IMR-90 (cell line): ENCODE measurements at regions of chr3 and their contacts with region 1.

Region 1: DNA sequence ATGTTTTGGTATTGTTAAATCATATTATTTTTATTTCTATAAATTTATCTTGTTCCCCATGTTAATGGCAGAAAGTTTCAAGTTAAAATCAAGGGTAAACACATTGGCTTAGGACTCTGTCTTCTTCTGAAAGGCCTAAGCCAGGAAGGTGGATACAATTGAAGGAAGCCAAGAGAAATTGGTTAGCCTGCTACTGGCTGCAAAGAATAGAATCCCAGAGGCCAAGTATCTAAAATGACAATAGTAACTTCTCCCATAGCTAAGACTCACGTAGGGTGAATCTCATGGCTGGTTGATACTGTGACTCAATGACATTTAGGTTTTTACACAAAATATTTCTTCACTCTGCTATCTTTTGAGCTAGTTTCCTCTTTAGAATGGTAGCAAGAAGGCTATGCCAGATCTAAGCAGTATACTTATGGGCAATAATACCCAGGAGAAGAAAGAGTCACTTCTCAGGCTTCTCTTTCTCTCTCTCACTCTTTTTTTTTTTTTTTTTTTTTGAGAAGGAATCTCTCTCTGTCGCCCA is 621.5 kb upstream of the TBL1XR1 start:
- DNase-seq: no peak
- ATAC-seq: no peak
- H3K4me3 ChIP-seq: no peak overlapping the region
- H3K27ac ChIP-seq: no peak overlapping the region
- H3K4me1 ChIP-seq: peaks cover 4% of the 10 kb centered on the region
- H3K27me3 ChIP-seq: no peaks in the 10 kb centered on the region
- CTCF ChIP-seq: no peak
- POLR2A ChIP-seq: no peak
- RAD21 ChIP-seq: no peak

Region 2: GRCh38 chr3:177886501-177886900 is 67.7 kb after region 1 on chr3:
- CTCF ChIA-PET with region 1: no interaction called
- POLR2A ChIA-PET with region 1: interaction called, 13 read pairs
- dilution Hi-C with region 1: no loop called
- in situ Hi-C with region 1: no loop called
- intact Hi-C with region 1: no loop called
- DNase-seq: no peak
- ATAC-seq: no peak
- H3K4me3 ChIP-seq: no peak overlapping the region
- H3K27ac ChIP-seq: no peak overlapping the region
- H3K4me1 ChIP-seq: no peaks in the 10 kb centered on the region
- H3K27me3 ChIP-seq: no peaks in the 10 kb centered on the region
- CTCF ChIP-seq: no peak
- POLR2A ChIP-seq: no peak
- RAD21 ChIP-seq: no peak

Region 3: GRCh38 chr3:178480795-178481194 is 662.0 kb after region 1 on chr3:
- CTCF ChIA-PET with region 1: no interaction called
- POLR2A ChIA-PET with region 1: no interaction called
- dilution Hi-C with region 1: no loop called
- in situ Hi-C with region 1: no loop called
- intact Hi-C with region 1: no loop called
- DNase-seq: no peak
- ATAC-seq: no peak
- H3K4me3 ChIP-seq: no peak overlapping the region
- H3K27ac ChIP-seq: no peak overlapping the region
- H3K4me1 ChIP-seq: no peaks in the 10 kb centered on the region
- H3K27me3 ChIP-seq: no peaks in the 10 kb centered on the region
- CTCF ChIP-seq: no peak
- POLR2A ChIP-seq: no peak
- RAD21 ChIP-seq: no peak

Region 4: GRCh38 chr3:178845420-178846118 is 1026.8 kb after region 1 on chr3:
- CTCF ChIA-PET with region 1: no interaction called
- POLR2A ChIA-PET with region 1: no interaction called
- dilution Hi-C with region 1: no loop called
- in situ Hi-C with region 1: no loop called
- intact Hi-C with region 1: no loop called
- DNase-seq: no peak
- ATAC-seq: no peak
- H3K4me3 ChIP-seq: no peak overlapping the region
- H3K27ac ChIP-seq: no peak overlapping the region
- H3K4me1 ChIP-seq: no peaks in the 10 kb centered on the region
- H3K27me3 ChIP-seq: no peaks in the 10 kb centered on the region
- CTCF ChIP-seq: no peak
- POLR2A ChIP-seq: no peak
- RAD21 ChIP-seq: no peak